BJ (cell line): ENCODE measurements at regions of chr17 and their contacts with region 1.

Region 1: DNA sequence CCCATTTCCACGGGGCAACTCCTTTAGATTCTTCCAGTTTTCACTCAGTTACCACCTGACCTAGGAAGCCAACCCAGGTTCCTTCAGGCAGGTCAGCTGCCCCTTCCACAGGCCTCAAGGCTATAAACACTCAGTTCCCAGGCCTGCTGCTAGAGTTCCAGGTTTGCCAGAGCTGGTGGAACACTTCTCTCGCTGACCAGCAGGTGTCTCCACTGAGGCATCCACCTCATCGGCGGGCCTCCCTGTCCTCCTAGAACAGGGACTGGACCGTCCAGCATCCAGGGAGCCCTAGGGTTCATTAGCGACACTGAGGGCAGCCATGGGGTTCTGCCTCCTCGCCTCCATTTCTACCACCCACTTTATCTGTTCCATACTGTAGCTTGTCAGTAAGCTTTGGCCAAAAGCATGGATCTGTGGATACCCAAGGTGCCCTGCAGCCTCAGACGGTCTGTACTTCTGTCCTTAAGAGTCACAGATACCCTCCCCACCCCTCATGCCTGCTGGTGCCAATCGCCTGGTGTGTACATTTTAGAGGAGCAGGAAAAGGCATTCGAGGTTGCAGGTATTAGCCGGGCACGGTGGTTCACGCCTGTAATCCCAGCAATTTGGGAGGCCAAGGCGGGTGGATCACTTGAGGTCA is 29.0 kb downstream of the PIMREG start:
- DNase-seq: no peak
- H3K4me3 ChIP-seq: no peak overlapping the region
- H3K27me3 ChIP-seq: no peaks in the 10 kb centered on the region
- CTCF ChIP-seq: peak; percentile 98

Region 2: DNA sequence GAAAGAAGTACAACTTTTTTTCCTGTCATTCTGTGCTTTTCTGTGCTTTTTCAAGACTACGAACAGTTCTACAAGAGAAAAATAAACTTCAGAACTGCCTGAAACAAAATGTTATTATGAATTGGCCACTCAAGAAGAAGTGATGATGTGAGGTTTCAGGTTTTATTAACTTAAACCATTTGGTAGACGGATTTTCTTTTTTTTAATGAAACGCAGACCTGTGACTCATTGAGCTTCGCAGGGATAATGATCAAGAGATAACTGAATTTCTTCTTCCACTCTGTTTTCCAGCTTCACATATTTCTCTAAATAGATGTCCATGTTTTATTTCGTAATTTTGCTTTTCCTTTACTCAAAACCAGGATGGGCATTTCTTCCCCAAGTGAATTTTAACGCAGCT is 71.0 kb before region 1 on chr17:
- CTCF ChIA-PET with region 1: no interaction called
- POLR2A ChIA-PET with region 1: no interaction called
- DNase-seq: peak; percentile 59
- H3K4me3 ChIP-seq: no peak overlapping the region
- H3K27me3 ChIP-seq: peaks cover 8% of the 10 kb centered on the region
- CTCF ChIP-seq: no peak

Region 3: GRCh38 chr17:6461792-6462524 is 11.3 kb before region 1 on chr17:
- CTCF ChIA-PET with region 1: interaction called, 18 read pairs
- POLR2A ChIA-PET with region 1: no interaction called
- DNase-seq: no peak
- H3K4me3 ChIP-seq: no peak overlapping the region
- H3K27me3 ChIP-seq: no peaks in the 10 kb centered on the region
- CTCF ChIP-seq: no peak

Region 4: DNA sequence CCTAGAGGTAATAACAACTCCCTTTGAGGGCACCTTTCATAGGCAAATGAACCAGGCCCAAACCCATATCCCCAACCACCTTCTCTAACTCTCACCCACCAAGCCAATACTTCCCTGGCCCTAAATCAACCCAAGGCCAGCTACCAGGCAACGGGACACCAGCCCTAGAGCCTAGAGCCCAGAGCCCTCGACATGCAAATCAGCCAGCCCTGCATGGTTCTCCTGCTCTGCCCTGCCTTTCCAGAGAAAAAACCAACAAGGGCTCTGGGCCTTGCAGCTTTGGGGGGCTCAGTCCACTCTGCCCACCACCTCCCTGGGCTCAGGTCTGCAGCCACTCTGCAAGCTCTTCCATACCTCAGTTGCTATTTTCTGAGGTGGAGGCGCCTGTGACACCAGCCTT is 28.1 kb after region 1 on chr17:
- CTCF ChIA-PET with region 1: interaction called, 10 read pairs
- POLR2A ChIA-PET with region 1: no interaction called
- DNase-seq: no peak
- H3K4me3 ChIP-seq: no peak overlapping the region
- H3K27me3 ChIP-seq: no peaks in the 10 kb centered on the region
- CTCF ChIP-seq: no peak

Region 5: GRCh38 chr17:6574687-6575595 is 101.7 kb after region 1 on chr17:
- CTCF ChIA-PET with region 1: interaction called, 27 read pairs
- POLR2A ChIA-PET with region 1: no interaction called
- DNase-seq: no peak
- H3K4me3 ChIP-seq: no peak overlapping the region
- H3K27me3 ChIP-seq: no peaks in the 10 kb centered on the region
- CTCF ChIP-seq: peak; percentile 22

Region 6: GRCh38 chr17:6640536-6641373 is 167.5 kb after region 1 on chr17 and contains the starts of genes KIAA0753 and TXNDC17:
- CTCF ChIA-PET with region 1: interaction called, 17 read pairs
- POLR2A ChIA-PET with region 1: no interaction called
- DNase-seq: peak; percentile 63
- H3K4me3 ChIP-seq: peak within 1 kb of the TSS; percentile 84
- H3K27me3 ChIP-seq: no peaks in the 10 kb centered on the region
- CTCF ChIP-seq: no peak
- polyA plus RNA-seq, gene KIAA0753: 5.4 and 7.9 TPM in 2 replicates
- polyA plus RNA-seq, gene TXNDC17: 213 TPM in 2 replicates